CD4-positive, alpha-beta memory T cell (primary cell): ENCODE measurements at regions of chr6 and their contacts with region 1.

Region 1: DNA sequence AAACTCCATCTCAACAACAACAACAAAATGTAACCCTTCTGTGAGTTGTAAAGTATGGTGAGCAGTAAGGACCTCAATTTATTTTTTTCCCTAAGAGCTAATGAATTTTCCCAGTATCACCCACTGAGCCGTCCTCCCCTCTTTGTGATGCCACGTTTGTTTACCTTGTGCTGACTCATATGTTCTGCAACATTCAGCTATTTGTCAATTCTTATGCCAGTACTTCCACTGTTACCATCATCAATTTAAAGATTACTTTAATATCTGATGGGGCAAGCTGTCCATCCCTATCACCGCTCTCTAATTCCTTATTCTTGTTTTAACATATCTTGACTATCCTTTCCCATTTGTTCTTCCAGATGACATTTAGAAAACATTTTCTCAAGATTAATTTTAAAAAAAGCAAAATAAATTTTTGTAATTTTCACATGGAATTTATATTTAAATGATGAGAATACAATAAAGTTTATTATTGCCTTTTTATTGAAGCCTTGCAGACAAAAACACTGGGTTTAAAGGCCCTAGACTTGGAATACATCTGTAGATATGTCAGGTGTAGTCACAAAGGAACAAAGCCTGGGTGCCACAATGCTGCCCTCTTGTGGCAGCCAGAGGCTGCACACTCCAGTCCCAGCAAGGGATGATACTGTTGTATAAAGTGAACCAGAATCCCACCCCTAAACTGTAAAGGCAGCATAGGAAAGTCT is 37.4 kb downstream of the MAK start:
- DNase-seq: peak in 4 of 5 donors; percentile 43 to 60 (median 54)
- H3K4me3 ChIP-seq: no peak overlapping the region
- H3K4me3 Mint-ChIP-seq: no peak overlapping the region
- H3K27ac ChIP-seq: no peak overlapping the region
- H3K27ac Mint-ChIP-seq: peak overlapping the region in 1 of 7 donors; percentile 57
- H3K4me1 ChIP-seq: no peaks in the 10 kb centered on the region
- H3K4me1 Mint-ChIP-seq: no peaks in the 10 kb centered on the region
- H3K27me3 ChIP-seq: no peaks in the 10 kb centered on the region
- H3K27me3 Mint-ChIP-seq: no peaks in the 10 kb centered on the region

Region 2: DNA sequence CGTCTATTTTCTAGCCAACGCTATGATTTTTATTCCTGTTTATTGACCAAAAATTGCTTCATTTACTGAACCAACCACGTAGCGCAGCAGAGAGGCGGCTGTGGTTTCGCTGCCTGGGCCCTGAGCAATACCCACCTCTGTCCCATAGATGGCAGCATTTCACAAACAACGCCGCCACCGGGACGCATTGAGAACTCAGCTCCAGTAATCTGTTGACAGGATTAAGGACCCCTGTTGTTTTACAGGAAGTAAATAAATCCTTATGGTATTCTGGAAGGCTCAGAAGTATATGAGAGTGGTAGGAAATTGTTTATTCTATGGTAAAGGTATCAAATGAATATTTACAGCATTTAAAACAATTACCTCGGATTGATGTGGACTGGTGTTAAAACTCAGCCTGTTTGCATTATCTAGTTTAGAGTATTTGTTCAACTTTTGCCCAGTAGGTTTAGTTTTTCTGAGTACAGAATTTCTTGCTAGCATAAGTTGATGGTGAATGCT is 1817.7 kb before region 1 on chr6:
- CTCF ChIA-PET with region 1: no interaction called
- POLR2A ChIA-PET with region 1: no interaction called
- intact Hi-C with region 1: loop called (anchors 5 kb)
- DNase-seq: peak in 4 of 5 donors; percentile 29 to 39 (median 34)
- H3K4me3 ChIP-seq: no peak overlapping the region
- H3K4me3 Mint-ChIP-seq: peak overlapping the region in 1 of 8 donors; percentile 32
- H3K27ac ChIP-seq: no peak overlapping the region
- H3K27ac Mint-ChIP-seq: no peak overlapping the region
- H3K4me1 ChIP-seq: no peaks in the 10 kb centered on the region
- H3K4me1 Mint-ChIP-seq: no peaks in the 10 kb centered on the region
- H3K27me3 ChIP-seq: no peaks in the 10 kb centered on the region
- H3K27me3 Mint-ChIP-seq: peaks cover 1 to 4% of the 10 kb centered on the region in 2 donors

Region 3: DNA sequence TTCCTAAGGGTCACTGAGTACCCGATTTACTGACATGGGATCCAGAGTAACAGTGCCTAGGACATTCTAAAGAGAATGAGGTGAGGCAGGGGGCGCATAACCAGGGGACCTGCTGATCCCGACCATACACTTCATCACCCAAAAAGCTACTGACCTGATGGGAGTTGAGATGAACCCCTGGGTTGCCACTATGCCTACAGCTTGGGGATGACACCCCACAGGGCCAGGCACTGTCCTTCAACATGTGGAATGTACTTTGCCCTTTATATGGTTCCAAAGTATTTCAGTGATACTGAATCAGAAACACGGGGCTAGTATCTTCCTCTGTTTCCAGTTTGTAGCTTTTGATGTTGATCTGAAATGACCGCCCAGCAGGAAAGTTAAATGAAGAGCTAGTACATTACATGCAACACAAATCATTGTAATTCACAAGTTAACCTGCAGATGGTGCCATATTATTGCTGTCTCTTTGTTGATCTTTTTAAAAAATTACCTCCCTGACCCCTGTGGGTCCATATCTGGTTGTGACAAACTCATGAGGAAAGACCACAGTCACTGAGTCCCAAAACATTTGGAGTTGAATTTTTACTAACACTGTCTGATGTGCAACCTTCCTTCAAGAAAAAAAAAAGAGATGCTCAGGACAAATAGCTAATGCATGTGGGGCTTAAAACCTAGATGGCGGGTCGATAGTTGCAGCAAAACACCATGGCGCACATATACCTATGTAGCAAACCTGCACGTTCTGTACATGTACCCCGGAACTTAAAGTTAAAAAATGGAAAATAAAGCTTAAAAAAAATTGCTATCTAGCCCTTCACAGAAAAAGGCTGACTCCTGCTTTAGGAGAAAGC is 322.6 kb before region 1 on chr6:
- CTCF ChIA-PET with region 1: interaction called, 117 read pairs
- POLR2A ChIA-PET with region 1: no interaction called
- intact Hi-C with region 1: no loop called
- DNase-seq: peak in 3 of 5 donors; percentile 13 to 38 (median 29)
- H3K4me3 ChIP-seq: no peak overlapping the region
- H3K4me3 Mint-ChIP-seq: peak overlapping the region in 1 of 8 donors; percentile 16
- H3K27ac ChIP-seq: no peak overlapping the region
- H3K27ac Mint-ChIP-seq: no peak overlapping the region
- H3K4me1 ChIP-seq: no peaks in the 10 kb centered on the region
- H3K4me1 Mint-ChIP-seq: peaks cover 0 to 2% (median 0%) of the 10 kb centered on the region in 4 donors
- H3K27me3 ChIP-seq: no peaks in the 10 kb centered on the region
- H3K27me3 Mint-ChIP-seq: peaks cover 17 to 26% of the 10 kb centered on the region in 2 donors

Region 4: GRCh38 chr6:10510592-10511367 is 290.2 kb before region 1 on chr6:
- CTCF ChIA-PET with region 1: interaction called, 33 read pairs
- POLR2A ChIA-PET with region 1: no interaction called
- intact Hi-C with region 1: loop called (anchors 1 kb)
- DNase-seq: peak in 4 of 5 donors; percentile 23 to 31 (median 26)
- H3K4me3 ChIP-seq: no peak overlapping the region
- H3K4me3 Mint-ChIP-seq: peak overlapping the region in 1 of 8 donors; percentile 23
- H3K27ac ChIP-seq: no peak overlapping the region
- H3K27ac Mint-ChIP-seq: peak overlapping the region in 2 of 7 donors; percentile 22 to 48
- H3K4me1 ChIP-seq: no peaks in the 10 kb centered on the region
- H3K4me1 Mint-ChIP-seq: peaks cover 0 to 7% (median 4%) of the 10 kb centered on the region in 4 donors
- H3K27me3 ChIP-seq: no peaks in the 10 kb centered on the region
- H3K27me3 Mint-ChIP-seq: peaks cover 1 to 3% of the 10 kb centered on the region in 2 donors

Region 5: GRCh38 chr6:10521104-10521808 is 279.7 kb before region 1 on chr6 and contains the start of gene GCNT2:
- CTCF ChIA-PET with region 1: no interaction called
- POLR2A ChIA-PET with region 1: no interaction called
- intact Hi-C with region 1: no loop called
- DNase-seq: no peak
- H3K4me3 ChIP-seq: no peak within 1 kb of the TSS
- H3K4me3 Mint-ChIP-seq: no peak within 1 kb of the TSS
- H3K27ac ChIP-seq: no peak within 1 kb of the TSS
- H3K27ac Mint-ChIP-seq: no peak within 1 kb of the TSS
- H3K4me1 ChIP-seq: no peaks in the 10 kb centered on the region
- H3K4me1 Mint-ChIP-seq: no peaks in the 10 kb centered on the region
- H3K27me3 ChIP-seq: no peaks in the 10 kb centered on the region
- H3K27me3 Mint-ChIP-seq: peaks cover 0 to 4% of the 10 kb centered on the region in 2 donors
- total RNA-seq, gene GCNT2: 3.1 to 4.2 TPM

Region 6: DNA sequence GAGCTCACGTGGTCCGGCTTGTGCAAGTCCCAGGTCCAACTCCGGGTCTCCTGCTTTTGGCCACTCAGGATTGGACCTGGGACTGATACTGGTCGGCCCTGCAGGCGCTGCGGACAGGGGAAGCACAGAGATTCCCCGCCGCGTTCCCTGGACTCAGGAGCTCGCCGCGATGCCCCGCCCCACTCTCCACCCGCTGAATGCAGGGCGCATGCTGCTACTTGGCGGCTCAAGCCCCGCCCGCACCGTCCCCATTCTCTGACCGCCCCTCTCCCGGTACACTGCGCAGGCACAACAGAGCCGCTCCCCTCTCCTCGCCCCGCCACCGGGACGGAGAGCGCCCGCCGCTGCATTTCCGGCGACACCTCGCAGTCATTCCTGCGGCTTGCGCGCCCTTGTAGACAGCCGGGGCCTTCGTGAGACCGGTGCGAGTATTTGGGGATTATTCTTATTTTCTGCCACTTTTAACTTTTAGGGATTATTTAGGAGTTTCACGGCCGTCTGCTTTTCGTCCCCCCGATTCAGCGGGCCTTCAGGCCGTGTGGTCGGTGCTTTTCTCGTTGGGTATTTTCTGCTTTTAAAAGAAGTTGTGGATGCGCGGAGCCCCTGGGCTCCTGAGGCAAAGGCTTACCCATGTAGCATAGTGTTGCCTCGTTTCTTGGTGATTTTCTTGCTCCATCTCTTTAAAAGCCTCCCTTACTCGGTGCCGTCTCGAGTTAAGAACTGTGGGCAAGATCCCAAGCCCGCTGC is 78.0 kb before region 1 on chr6 and contains the start of gene TMEM14C:
- CTCF ChIA-PET with region 1: interaction called, 5 read pairs
- POLR2A ChIA-PET with region 1: no interaction called
- intact Hi-C with region 1: loop called (anchors 1 kb)
- DNase-seq: peak; percentile 61 to 80 (median 68)
- H3K4me3 ChIP-seq: peak within 1 kb of the TSS; percentile 24 to 57
- H3K4me3 Mint-ChIP-seq: peak within 1 kb of the TSS; percentile 93 to 97 (median 96)
- H3K27ac ChIP-seq: peak within 1 kb of the TSS; percentile 62
- H3K27ac Mint-ChIP-seq: peak within 1 kb of the TSS; percentile 84 to 96 (median 93)
- H3K4me1 ChIP-seq: peaks cover 48% of the 10 kb centered on the region
- H3K4me1 Mint-ChIP-seq: peaks cover 34 to 64% (median 48%) of the 10 kb centered on the region in 4 donors
- H3K27me3 ChIP-seq: no peaks in the 10 kb centered on the region
- H3K27me3 Mint-ChIP-seq: no peaks in the 10 kb centered on the region
- total RNA-seq, gene TMEM14C: 34.1 to 37.3 TPM

Region 7: GRCh38 chr6:10908228-10908627 is 107.2 kb after region 1 on chr6:
- CTCF ChIA-PET with region 1: no interaction called
- POLR2A ChIA-PET with region 1: no interaction called
- intact Hi-C with region 1: no loop called
- DNase-seq: no peak
- H3K4me3 ChIP-seq: no peak overlapping the region
- H3K4me3 Mint-ChIP-seq: no peak overlapping the region
- H3K27ac ChIP-seq: no peak overlapping the region
- H3K27ac Mint-ChIP-seq: no peak overlapping the region
- H3K4me1 ChIP-seq: no peaks in the 10 kb centered on the region
- H3K4me1 Mint-ChIP-seq: no peaks in the 10 kb centered on the region
- H3K27me3 ChIP-seq: peaks cover 3% of the 10 kb centered on the region
- H3K27me3 Mint-ChIP-seq: peaks cover 4 to 5% of the 10 kb centered on the region in 2 donors

Region 8: DNA sequence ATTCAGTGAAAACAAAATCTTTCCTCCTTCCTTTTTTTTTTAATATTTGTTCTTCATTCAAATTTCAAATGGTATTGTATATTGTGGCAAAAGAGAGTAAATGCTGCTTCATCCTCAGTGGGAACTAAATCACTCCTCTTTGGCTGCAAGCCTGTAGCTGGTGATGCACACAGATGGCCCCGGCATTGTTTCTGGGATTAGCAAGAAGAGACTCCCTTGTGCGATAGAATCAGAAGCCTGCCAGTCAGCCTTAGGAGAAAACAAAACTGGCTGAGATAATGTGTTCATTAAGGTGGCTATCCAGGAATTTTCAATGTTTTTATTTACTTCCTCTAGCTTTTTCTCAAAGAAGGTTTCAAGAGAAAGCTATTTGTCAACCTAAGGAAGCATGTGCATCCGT is 263.9 kb after region 1 on chr6:
- CTCF ChIA-PET with region 1: no interaction called
- POLR2A ChIA-PET with region 1: no interaction called
- intact Hi-C with region 1: loop called (anchors 1 kb)
- DNase-seq: no peak
- H3K4me3 ChIP-seq: no peak overlapping the region
- H3K4me3 Mint-ChIP-seq: no peak overlapping the region
- H3K27ac ChIP-seq: no peak overlapping the region
- H3K27ac Mint-ChIP-seq: no peak overlapping the region
- H3K4me1 ChIP-seq: no peaks in the 10 kb centered on the region
- H3K4me1 Mint-ChIP-seq: no peaks in the 10 kb centered on the region
- H3K27me3 ChIP-seq: no peaks in the 10 kb centered on the region
- H3K27me3 Mint-ChIP-seq: peaks cover 7% of the 10 kb centered on the region in 2 donors